K562 (cell line): ENCODE measurements at regions of chr14 and their contacts with region 1.

Region 1: DNA sequence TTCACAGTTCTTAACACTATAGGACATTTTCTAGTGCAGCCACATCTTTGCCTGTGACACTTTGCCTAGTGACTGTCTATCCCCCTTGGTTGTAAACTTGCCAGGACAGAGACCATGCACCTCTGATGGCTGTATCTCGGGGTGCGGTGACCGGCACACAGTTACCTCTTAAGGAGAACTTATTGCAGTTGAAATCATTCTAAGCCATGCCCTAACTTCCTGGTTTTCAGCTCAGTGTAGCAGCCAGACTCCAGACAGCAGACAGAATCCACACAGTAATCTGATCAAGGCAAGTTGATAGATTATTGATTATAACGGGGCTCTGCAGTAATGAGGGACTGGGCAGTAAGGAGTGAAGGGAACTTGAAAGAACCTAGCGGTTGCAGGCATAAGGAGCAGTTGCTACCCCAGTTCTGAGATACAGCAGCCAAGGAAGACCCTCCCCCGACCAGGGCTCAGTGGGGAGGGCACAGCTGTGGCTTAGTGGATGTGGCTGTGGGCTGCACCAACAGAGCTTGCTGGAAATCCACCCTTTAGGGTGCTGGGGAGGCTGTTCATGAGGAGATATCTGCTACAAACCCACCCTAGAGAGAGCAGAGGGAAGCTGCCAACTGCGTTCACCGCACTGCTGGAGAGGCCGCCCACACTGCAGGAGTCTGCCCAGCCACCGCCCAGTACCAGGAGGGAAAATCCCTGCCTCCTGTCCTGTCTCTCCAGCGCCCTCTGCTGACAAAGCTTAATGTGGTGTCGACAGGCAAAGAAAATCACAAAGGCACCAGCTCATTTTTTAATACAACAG is 58.2 kb upstream of the BEGAIN start:
- DNase-seq: peak; percentile 77 to 85 (median 82)
- ATAC-seq: peak; percentile 93
- H3K4me3 ChIP-seq: no peak overlapping the region
- H3K27ac ChIP-seq: peak overlapping the region; percentile 51; the same call in 2 of the 3 replicates
- H3K4me1 ChIP-seq: peaks cover 21 to 22% of the 10 kb centered on the region in 2 experiments
- H3K27me3 ChIP-seq: no peaks in the 10 kb centered on the region
- CTCF ChIP-seq: peak; percentile 75 to 87 (median 85)
- EP300 ChIP-seq: no peak
- POLR2A ChIP-seq: no peak
- RAD21 ChIP-seq: peak; percentile 78 to 92

Region 2: GRCh38 chr14:100383727-100384158 is 261.6 kb before region 1 on chr14:
- CTCF ChIA-PET with region 1: interaction called, 4 read pairs
- POLR2A ChIA-PET with region 1: no interaction called
- in situ Hi-C with region 1: loop called (anchors 5 kb)
- intact Hi-C with region 1: loop called (anchors 1 kb)
- DNase-seq: peak; percentile 55 to 72 (median 60)
- ATAC-seq: peak; percentile 91
- H3K4me3 ChIP-seq: no peak overlapping the region
- H3K27ac ChIP-seq: no peak overlapping the region
- H3K4me1 ChIP-seq: peaks cover 7 to 16% of the 10 kb centered on the region in 2 experiments; a peak in 3 of 5 replicates
- H3K27me3 ChIP-seq: no peaks in the 10 kb centered on the region
- CTCF ChIP-seq: peak; percentile 76 to 80 (median 79)
- EP300 ChIP-seq: no peak
- POLR2A ChIP-seq: no peak
- RAD21 ChIP-seq: peak; percentile 40 to 67

Region 3: DNA sequence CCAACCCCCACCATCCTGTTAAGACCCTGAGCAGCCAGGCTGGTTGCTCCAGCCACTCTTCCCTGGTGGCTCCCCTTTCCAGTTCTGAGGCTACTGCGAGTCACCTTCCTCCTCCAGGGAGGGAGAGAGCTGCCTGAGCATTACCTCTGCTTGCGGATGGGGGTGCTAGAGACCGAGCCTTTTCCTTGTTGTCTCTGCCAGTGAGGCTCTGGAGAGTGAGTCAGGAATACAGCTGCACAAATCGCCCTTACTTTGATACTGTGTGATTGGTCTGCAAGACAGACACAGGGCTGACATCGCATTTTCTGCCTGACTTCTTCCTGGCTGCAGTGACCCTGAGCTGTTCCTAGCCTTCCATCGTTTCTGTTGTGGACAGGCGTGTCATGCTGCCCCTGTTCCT is 227.9 kb before region 1 on chr14:
- CTCF ChIA-PET with region 1: no interaction called
- POLR2A ChIA-PET with region 1: no interaction called
- in situ Hi-C with region 1: no loop called
- intact Hi-C with region 1: loop called (anchors 1 kb)
- DNase-seq: peak; percentile 63 to 81 (median 71)
- ATAC-seq: peak; percentile 98
- H3K4me3 ChIP-seq: no peak overlapping the region
- H3K27ac ChIP-seq: peak overlapping the region; percentile 48; the same call in 2 of the 3 replicates
- H3K4me1 ChIP-seq: peaks cover 9 to 14% of the 10 kb centered on the region in 2 experiments; a peak in 3 of 5 replicates
- H3K27me3 ChIP-seq: no peaks in the 10 kb centered on the region
- CTCF ChIP-seq: peak; percentile 80 to 89 (median 88)
- EP300 ChIP-seq: peak; percentile 29; the same call in 1 of the 2 replicates
- POLR2A ChIP-seq: no peak
- RAD21 ChIP-seq: peak; percentile 78 to 84

Region 4: DNA sequence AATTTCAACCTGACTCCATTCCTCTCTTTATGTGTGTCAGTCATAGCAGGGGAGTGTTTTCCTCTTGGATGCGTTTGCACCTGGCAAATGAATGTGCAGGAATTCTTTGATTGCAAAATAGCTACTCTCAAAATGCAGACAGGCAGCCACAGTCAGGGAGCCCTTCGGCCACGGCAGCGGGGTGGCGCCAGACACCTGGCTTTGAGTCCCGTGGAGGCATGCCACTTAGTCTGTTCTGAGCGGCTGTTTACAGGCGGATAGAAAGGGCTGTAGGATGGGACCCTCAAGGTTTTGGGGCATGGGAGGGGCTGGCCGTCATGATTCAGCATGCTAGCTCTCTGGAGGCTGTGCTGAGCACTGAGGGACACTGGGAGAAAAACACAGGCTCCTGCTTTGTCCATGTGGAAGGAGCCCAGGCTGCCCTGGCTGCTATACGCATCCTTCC is 205.2 kb before region 1 on chr14:
- CTCF ChIA-PET with region 1: no interaction called
- POLR2A ChIA-PET with region 1: no interaction called
- in situ Hi-C with region 1: no loop called
- intact Hi-C with region 1: loop called (anchors 1 kb)
- DNase-seq: peak; percentile 62 to 79 (median 69)
- ATAC-seq: peak; percentile 94
- H3K4me3 ChIP-seq: no peak overlapping the region
- H3K27ac ChIP-seq: peak overlapping the region; percentile 65; the same call in 2 of the 3 replicates
- H3K4me1 ChIP-seq: peaks cover 29 to 40% of the 10 kb centered on the region in 2 experiments
- H3K27me3 ChIP-seq: no peaks in the 10 kb centered on the region
- CTCF ChIP-seq: peak; percentile 82 to 84 (median 83)
- EP300 ChIP-seq: no peak
- POLR2A ChIP-seq: no peak
- RAD21 ChIP-seq: peak; percentile 81 to 86

Region 5: DNA sequence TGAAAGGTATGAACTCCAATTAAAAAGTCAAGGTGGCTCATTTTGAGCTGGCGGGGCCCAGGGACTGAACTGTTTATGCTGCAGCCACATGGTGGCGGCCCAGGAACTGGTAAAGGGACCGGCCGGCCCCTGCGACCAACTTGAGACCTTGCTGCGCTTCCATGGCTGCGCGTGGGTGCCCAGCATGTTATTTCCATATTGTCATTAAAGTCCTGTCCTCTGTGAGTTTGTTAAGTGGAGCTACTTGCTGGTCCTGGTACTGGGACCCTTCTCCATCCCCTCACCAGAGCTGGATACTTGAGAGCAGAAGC is 120.5 kb before region 1 on chr14:
- CTCF ChIA-PET with region 1: no interaction called
- POLR2A ChIA-PET with region 1: no interaction called
- in situ Hi-C with region 1: loop called (anchors 5 kb)
- intact Hi-C with region 1: loop called (anchors 1 kb)
- DNase-seq: peak; percentile 66 to 74 (median 70)
- ATAC-seq: peak; percentile 93
- H3K4me3 ChIP-seq: no peak overlapping the region
- H3K27ac ChIP-seq: no peak overlapping the region
- H3K4me1 ChIP-seq: no peaks in the 10 kb centered on the region; a peak in 1 of 5 replicates
- H3K27me3 ChIP-seq: no peaks in the 10 kb centered on the region
- CTCF ChIP-seq: peak; percentile 74 to 78 (median 74)
- EP300 ChIP-seq: no peak
- POLR2A ChIP-seq: no peak
- RAD21 ChIP-seq: peak; percentile 65 to 85

Region 6: GRCh38 chr14:100533656-100534485 is 111.5 kb before region 1 on chr14:
- CTCF ChIA-PET with region 1: no interaction called
- POLR2A ChIA-PET with region 1: no interaction called
- in situ Hi-C with region 1: loop called (anchors 5 kb)
- intact Hi-C with region 1: no loop called
- DNase-seq: no peak
- ATAC-seq: no peak
- H3K4me3 ChIP-seq: no peak overlapping the region
- H3K27ac ChIP-seq: no peak overlapping the region
- H3K4me1 ChIP-seq: peaks cover 0 to 20% of the 10 kb centered on the region in 2 experiments; a peak in 2 of 5 replicates
- H3K27me3 ChIP-seq: no peaks in the 10 kb centered on the region
- CTCF ChIP-seq: no peak
- EP300 ChIP-seq: no peak
- POLR2A ChIP-seq: no peak
- RAD21 ChIP-seq: no peak

Region 7: GRCh38 chr14:100547633-100548294 is 97.6 kb before region 1 on chr14:
- CTCF ChIA-PET with region 1: no interaction called
- POLR2A ChIA-PET with region 1: no interaction called
- in situ Hi-C with region 1: no loop called
- intact Hi-C with region 1: loop called (anchors 5 kb)
- DNase-seq: no peak
- ATAC-seq: no peak
- H3K4me3 ChIP-seq: no peak overlapping the region
- H3K27ac ChIP-seq: no peak overlapping the region
- H3K4me1 ChIP-seq: peaks cover 12 to 55% of the 10 kb centered on the region in 2 experiments; a peak in 4 of 5 replicates
- H3K27me3 ChIP-seq: no peaks in the 10 kb centered on the region
- CTCF ChIP-seq: no peak
- EP300 ChIP-seq: no peak
- POLR2A ChIP-seq: no peak
- RAD21 ChIP-seq: no peak